ENCODE measurements at regions of chr3 and their contacts with region 1.

Region 1: GRCh38 chr3:44761424-44762169 is at the starts of genes KIAA1143 and KIF15:
- DNase-seq: peak; percentile 92 to 98 (median 94)
- ATAC-seq: peak; percentile 100
- H3K4me3 ChIP-seq: peak within 1 kb of the TSS; percentile 99
- H3K4me3 Mint-ChIP-seq: peak within 1 kb of the TSS; percentile 86 to 94 (median 90)
- H3K27ac ChIP-seq: peak within 1 kb of the TSS; percentile 82
- H3K27ac Mint-ChIP-seq: peak within 1 kb of the TSS; percentile 80 to 96 (median 92)
- H3K4me1 ChIP-seq: peaks cover 0 to 6% of the 10 kb centered on the region in 2 donors
- H3K4me1 Mint-ChIP-seq: peaks cover 16 to 51% (median 42%) of the 10 kb centered on the region in 7 donors
- H3K27me3 ChIP-seq: no peaks in the 10 kb centered on the region
- H3K27me3 Mint-ChIP-seq: peaks cover 0 to 3% (median 0%) of the 10 kb centered on the region in 5 donors
- total RNA-seq, gene KIAA1143: 17.5 to 44.4 (median 39.8) TPM
- total RNA-seq, gene KIF15: 0.11 to 31.9 (median 0.30) TPM

Region 2: DNA sequence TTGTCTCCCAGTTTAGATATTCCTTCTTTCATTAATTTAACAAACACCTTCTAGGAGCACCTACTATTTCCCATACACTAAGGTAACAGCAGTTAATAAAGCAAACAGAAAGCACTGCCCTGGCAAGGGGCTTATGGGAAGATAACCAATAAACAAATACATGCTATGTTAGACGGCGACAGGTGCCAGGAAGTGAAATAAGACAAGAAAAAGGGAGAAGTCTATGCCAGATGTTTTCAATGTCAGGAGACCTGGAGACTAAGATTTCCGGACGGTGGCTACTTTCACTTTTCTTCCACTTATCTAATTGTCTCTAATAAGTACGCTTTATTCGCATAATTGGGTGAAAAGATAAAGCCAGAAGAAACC is 251.6 kb before region 1 on chr3:
- CTCF ChIA-PET with region 1: no interaction called
- POLR2A ChIA-PET with region 1: interaction called, 7 read pairs
- intact Hi-C with region 1: loop called (anchors 1 kb)
- DNase-seq: peak in 3 of 9 donors; percentile 3 to 19 (median 12)
- ATAC-seq: peak; percentile 23
- H3K4me3 ChIP-seq: peak overlapping the region; percentile 73
- H3K4me3 Mint-ChIP-seq: peak overlapping the region; percentile 93 to 98 (median 96)
- H3K27ac ChIP-seq: peak overlapping the region; percentile 92
- H3K27ac Mint-ChIP-seq: peak overlapping the region; percentile 78 to 97 (median 93)
- H3K4me1 ChIP-seq: peaks cover 6 to 19% of the 10 kb centered on the region in 2 donors
- H3K4me1 Mint-ChIP-seq: peaks cover 30 to 52% (median 48%) of the 10 kb centered on the region in 7 donors
- H3K27me3 ChIP-seq: no peaks in the 10 kb centered on the region
- H3K27me3 Mint-ChIP-seq: no peaks in the 10 kb centered on the region

Region 3: DNA sequence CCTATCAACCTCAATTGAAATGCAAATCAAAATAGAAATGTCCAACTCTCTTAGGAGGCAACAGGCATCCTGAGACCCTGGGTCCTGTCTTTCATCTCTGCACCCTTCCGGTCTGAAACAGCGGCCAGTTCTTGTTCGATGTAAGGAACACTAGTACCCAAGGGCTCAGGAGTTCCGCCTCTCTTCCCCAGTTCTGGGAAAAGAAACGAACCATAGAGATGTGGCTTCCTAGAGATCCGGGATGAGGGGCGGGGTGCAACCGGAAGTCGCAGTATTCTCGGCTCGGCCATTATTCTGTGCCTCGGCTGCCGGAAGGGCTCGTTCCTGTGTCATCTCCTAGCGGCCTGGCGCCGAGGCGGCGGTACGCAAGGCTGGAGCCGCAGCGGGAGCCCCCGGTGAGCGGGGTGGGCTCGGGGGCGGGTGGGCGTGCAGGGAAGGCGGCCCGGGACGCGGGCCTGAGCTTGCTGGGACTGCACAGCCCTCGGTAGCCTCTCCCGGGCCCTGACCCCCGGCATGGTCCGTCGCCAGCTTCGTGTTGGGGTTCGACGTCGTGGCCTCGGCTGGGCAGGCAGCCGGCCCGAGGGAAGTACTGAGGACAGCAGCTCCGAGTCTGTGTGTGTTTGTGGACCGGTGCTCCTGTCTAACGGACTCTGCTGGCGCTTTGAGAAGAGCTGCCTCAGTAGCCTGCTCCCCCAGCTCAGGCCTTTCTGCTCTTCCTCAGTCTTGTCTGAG is 136.7 kb before region 1 on chr3 and contains the start of gene ZNF197:
- CTCF ChIA-PET with region 1: no interaction called
- POLR2A ChIA-PET with region 1: no interaction called
- intact Hi-C with region 1: loop called (anchors 1 to 2 kb)
- DNase-seq: peak; percentile 5 to 64 (median 27)
- ATAC-seq: peak; percentile 80
- H3K4me3 ChIP-seq: peak within 1 kb of the TSS; percentile 51
- H3K4me3 Mint-ChIP-seq: peak within 1 kb of the TSS; percentile 83 to 94 (median 92)
- H3K27ac ChIP-seq: peak within 1 kb of the TSS; percentile 66
- H3K27ac Mint-ChIP-seq: peak within 1 kb of the TSS; percentile 60 to 88 (median 81)
- H3K4me1 ChIP-seq: peaks cover 9 to 10% of the 10 kb centered on the region in 2 donors
- H3K4me1 Mint-ChIP-seq: peaks cover 18 to 53% (median 47%) of the 10 kb centered on the region in 7 donors
- H3K27me3 ChIP-seq: no peaks in the 10 kb centered on the region
- H3K27me3 Mint-ChIP-seq: no peaks in the 10 kb centered on the region
- total RNA-seq, gene ZNF197: 5.5 to 15.6 (median 15.0) TPM

Region 4: GRCh38 chr3:44861412-44862220 is 100.0 kb after region 1 on chr3 and contains the start of gene TMEM42:
- CTCF ChIA-PET with region 1: no interaction called
- POLR2A ChIA-PET with region 1: interaction called, 3 read pairs
- intact Hi-C with region 1: loop called (anchors 1 kb)
- DNase-seq: peak; percentile 81 to 89 (median 84)
- ATAC-seq: peak; percentile 97
- H3K4me3 ChIP-seq: peak within 1 kb of the TSS; percentile 78
- H3K4me3 Mint-ChIP-seq: peak within 1 kb of the TSS; percentile 88 to 92 (median 91)
- H3K27ac ChIP-seq: peak within 1 kb of the TSS; percentile 76
- H3K27ac Mint-ChIP-seq: peak within 1 kb of the TSS; percentile 86 to 97 (median 92)
- H3K4me1 ChIP-seq: peaks cover 15 to 29% of the 10 kb centered on the region in 2 donors
- H3K4me1 Mint-ChIP-seq: peaks cover 23 to 48% (median 43%) of the 10 kb centered on the region in 7 donors
- H3K27me3 ChIP-seq: no peaks in the 10 kb centered on the region
- H3K27me3 Mint-ChIP-seq: no peaks in the 10 kb centered on the region
- total RNA-seq, gene TMEM42: 12.1 to 25.1 (median 16.4) TPM

Region 5: GRCh38 chr3:45224824-45225464 is 463.3 kb after region 1 on chr3:
- CTCF ChIA-PET with region 1: no interaction called
- POLR2A ChIA-PET with region 1: no interaction called
- intact Hi-C with region 1: loop called in 1 of 2 experiments (anchors 5 kb)
- DNase-seq: peak in 4 of 9 donors; percentile 8 to 50 (median 20)
- ATAC-seq: peak; percentile 52
- H3K4me3 ChIP-seq: no peak overlapping the region
- H3K4me3 Mint-ChIP-seq: peak overlapping the region; percentile 84 to 89 (median 87)
- H3K27ac ChIP-seq: no peak overlapping the region
- H3K27ac Mint-ChIP-seq: peak overlapping the region in 3 of 9 donors; percentile 38 to 84 (median 66)
- H3K4me1 ChIP-seq: peaks cover 4 to 7% of the 10 kb centered on the region in 2 donors
- H3K4me1 Mint-ChIP-seq: peaks cover 10 to 16% (median 13%) of the 10 kb centered on the region in 7 donors
- H3K27me3 ChIP-seq: peaks cover 8 to 14% of the 10 kb centered on the region in 2 donors
- H3K27me3 Mint-ChIP-seq: peaks cover 71 to 82% (median 81%) of the 10 kb centered on the region in 5 donors